B cell (primary cell): ENCODE measurements at regions of chr1 and their contacts with region 1.

Region 1: GRCh38 chr1:66446261-66447001 is 87.5 kb upstream of the SGIP1 start:
- DNase-seq: peak; percentile 86
- ATAC-seq: peak; percentile 52
- H3K4me3 ChIP-seq: peak overlapping the region in 1 of 5 experiments; percentile 43
- H3K4me3 Mint-ChIP-seq: peak overlapping the region; percentile 62
- H3K27ac ChIP-seq: peak overlapping the region; percentile 73 to 78
- H3K27ac Mint-ChIP-seq: peak overlapping the region; percentile 56
- H3K4me1 ChIP-seq: peaks cover 16 to 18% of the 10 kb centered on the region in 2 donors
- H3K4me1 Mint-ChIP-seq: peaks cover 29% of the 10 kb centered on the region
- H3K27me3 ChIP-seq: no peaks in the 10 kb centered on the region
- H3K27me3 Mint-ChIP-seq: no peaks in the 10 kb centered on the region
- CTCF ChIP-seq: peak; percentile 89

Region 2: DNA sequence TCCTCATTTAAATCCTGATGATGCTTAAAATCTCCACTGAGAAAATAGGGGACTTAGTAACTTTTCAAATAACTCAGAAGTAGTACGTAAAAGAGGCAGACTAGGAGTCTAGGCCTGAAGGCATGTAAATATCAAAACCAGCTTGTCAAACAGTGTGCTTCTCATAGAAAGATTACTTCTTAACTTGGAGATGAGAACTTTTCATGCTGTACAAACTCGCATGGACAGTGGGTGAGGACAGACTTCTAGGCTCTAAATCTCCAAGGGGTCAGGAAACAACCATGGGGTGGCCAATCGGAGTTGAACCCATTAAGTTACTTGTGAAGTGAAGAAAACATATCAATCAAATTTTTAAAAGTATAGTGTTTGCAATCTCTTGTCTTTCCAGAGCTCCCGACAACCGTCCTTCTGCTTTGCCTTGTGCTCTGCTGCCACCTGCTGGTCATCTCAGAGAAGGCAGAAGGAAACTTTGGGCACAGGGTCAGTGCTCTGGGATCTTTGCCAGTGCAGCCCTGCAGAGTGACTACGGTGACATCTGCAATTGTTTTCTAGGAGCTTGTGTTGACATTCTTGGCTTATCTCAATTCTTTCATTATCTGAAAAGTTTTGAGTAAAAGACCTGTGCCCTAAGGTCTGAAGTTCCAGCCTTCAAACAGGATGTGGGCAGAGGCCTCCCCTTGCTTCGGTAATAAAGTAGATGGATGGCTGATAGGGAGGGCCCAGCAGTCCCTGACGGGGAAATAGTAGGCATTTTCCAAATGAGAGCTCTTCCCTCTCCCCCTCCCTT is 758.8 kb before region 1 on chr1:
- CTCF ChIA-PET with region 1: interaction called, 15 read pairs
- POLR2A ChIA-PET with region 1: no interaction called
- intact Hi-C with region 1: no loop called
- DNase-seq: peak; percentile 71
- ATAC-seq: peak; percentile 56
- H3K4me3 ChIP-seq: no peak overlapping the region
- H3K4me3 Mint-ChIP-seq: no peak overlapping the region
- H3K27ac ChIP-seq: no peak overlapping the region
- H3K27ac Mint-ChIP-seq: no peak overlapping the region
- H3K4me1 ChIP-seq: no peaks in the 10 kb centered on the region
- H3K4me1 Mint-ChIP-seq: no peaks in the 10 kb centered on the region
- H3K27me3 ChIP-seq: no peaks in the 10 kb centered on the region
- H3K27me3 Mint-ChIP-seq: peaks cover 29% of the 10 kb centered on the region
- CTCF ChIP-seq: peak; percentile 95

Region 3: DNA sequence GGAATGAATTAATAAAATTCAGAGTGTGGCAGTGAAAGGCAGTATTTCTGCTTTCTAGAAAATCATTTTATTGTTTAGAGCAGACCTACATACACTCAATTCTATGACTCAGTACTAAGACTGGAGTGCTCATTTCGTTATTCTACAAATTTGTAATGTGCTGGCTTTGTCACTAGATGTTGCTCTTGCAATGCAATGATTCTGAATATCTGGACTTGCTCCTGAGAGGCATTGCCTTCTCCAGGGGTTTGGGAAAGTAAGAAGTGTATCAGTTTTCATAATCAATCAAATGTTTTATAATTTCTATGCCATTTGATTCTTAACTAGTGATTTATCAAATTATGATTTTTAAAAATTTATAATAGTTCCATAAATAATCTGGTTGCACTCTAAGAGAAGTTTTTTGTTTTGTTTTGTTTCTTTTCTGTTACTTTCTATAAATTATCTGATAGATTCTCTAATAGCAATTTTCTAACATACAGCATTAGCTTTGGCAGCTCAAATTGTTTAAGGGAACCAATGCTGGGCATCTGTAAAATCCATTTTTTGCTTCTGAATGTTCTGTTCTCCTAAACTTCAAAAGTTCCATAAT is 193.0 kb before region 1 on chr1:
- CTCF ChIA-PET with region 1: interaction called, 572 read pairs
- POLR2A ChIA-PET with region 1: no interaction called
- intact Hi-C with region 1: loop called (anchors 1 kb)
- DNase-seq: peak; percentile 73
- ATAC-seq: peak; percentile 73
- H3K4me3 ChIP-seq: no peak overlapping the region
- H3K4me3 Mint-ChIP-seq: no peak overlapping the region
- H3K27ac ChIP-seq: no peak overlapping the region
- H3K27ac Mint-ChIP-seq: no peak overlapping the region
- H3K4me1 ChIP-seq: peaks cover 7 to 13% of the 10 kb centered on the region in 2 donors
- H3K4me1 Mint-ChIP-seq: peaks cover 22% of the 10 kb centered on the region
- H3K27me3 ChIP-seq: no peaks in the 10 kb centered on the region
- H3K27me3 Mint-ChIP-seq: no peaks in the 10 kb centered on the region
- CTCF ChIP-seq: peak; percentile 83

Region 4: GRCh38 chr1:66282343-66282852 is 164.0 kb before region 1 on chr1:
- CTCF ChIA-PET with region 1: interaction called, 28 read pairs
- POLR2A ChIA-PET with region 1: no interaction called
- intact Hi-C with region 1: loop called (anchors 1 kb)
- DNase-seq: peak; percentile 94
- ATAC-seq: peak; percentile 91
- H3K4me3 ChIP-seq: peak overlapping the region in 2 of 5 experiments; percentile 10 to 39
- H3K4me3 Mint-ChIP-seq: peak overlapping the region; percentile 80
- H3K27ac ChIP-seq: peak overlapping the region; percentile 86 to 88
- H3K27ac Mint-ChIP-seq: peak overlapping the region; percentile 92
- H3K4me1 ChIP-seq: peaks cover 62 to 67% of the 10 kb centered on the region in 2 donors
- H3K4me1 Mint-ChIP-seq: peaks cover 79% of the 10 kb centered on the region
- H3K27me3 ChIP-seq: no peaks in the 10 kb centered on the region
- H3K27me3 Mint-ChIP-seq: no peaks in the 10 kb centered on the region
- CTCF ChIP-seq: peak; percentile 44

Region 5: GRCh38 chr1:66350001-66350547 is 96.4 kb before region 1 on chr1:
- CTCF ChIA-PET with region 1: interaction called, 79 read pairs
- POLR2A ChIA-PET with region 1: no interaction called
- intact Hi-C with region 1: no loop called
- DNase-seq: peak; percentile 82
- ATAC-seq: peak; percentile 78
- H3K4me3 ChIP-seq: peak overlapping the region in 2 of 5 experiments; percentile 4 to 31
- H3K4me3 Mint-ChIP-seq: peak overlapping the region; percentile 88
- H3K27ac ChIP-seq: peak overlapping the region; percentile 74 to 87
- H3K27ac Mint-ChIP-seq: peak overlapping the region; percentile 84
- H3K4me1 ChIP-seq: peaks cover 74 to 94% of the 10 kb centered on the region in 2 donors
- H3K4me1 Mint-ChIP-seq: peaks cover 95% of the 10 kb centered on the region
- H3K27me3 ChIP-seq: no peaks in the 10 kb centered on the region
- H3K27me3 Mint-ChIP-seq: no peaks in the 10 kb centered on the region
- CTCF ChIP-seq: no peak

Region 6: GRCh38 chr1:66380452-66381212 is 65.8 kb before region 1 on chr1:
- CTCF ChIA-PET with region 1: interaction called, 181 read pairs
- POLR2A ChIA-PET with region 1: interaction called, 11 read pairs
- intact Hi-C with region 1: no loop called
- DNase-seq: peak; percentile 91
- ATAC-seq: peak; percentile 99
- H3K4me3 ChIP-seq: peak overlapping the region in 2 of 5 experiments; percentile 13 to 39
- H3K4me3 Mint-ChIP-seq: peak overlapping the region; percentile 74
- H3K27ac ChIP-seq: peak overlapping the region; percentile 67 to 83
- H3K27ac Mint-ChIP-seq: peak overlapping the region; percentile 85
- H3K4me1 ChIP-seq: peaks cover 67 to 68% of the 10 kb centered on the region in 2 donors
- H3K4me1 Mint-ChIP-seq: peaks cover 75% of the 10 kb centered on the region
- H3K27me3 ChIP-seq: no peaks in the 10 kb centered on the region
- H3K27me3 Mint-ChIP-seq: no peaks in the 10 kb centered on the region
- CTCF ChIP-seq: no peak

Region 7: DNA sequence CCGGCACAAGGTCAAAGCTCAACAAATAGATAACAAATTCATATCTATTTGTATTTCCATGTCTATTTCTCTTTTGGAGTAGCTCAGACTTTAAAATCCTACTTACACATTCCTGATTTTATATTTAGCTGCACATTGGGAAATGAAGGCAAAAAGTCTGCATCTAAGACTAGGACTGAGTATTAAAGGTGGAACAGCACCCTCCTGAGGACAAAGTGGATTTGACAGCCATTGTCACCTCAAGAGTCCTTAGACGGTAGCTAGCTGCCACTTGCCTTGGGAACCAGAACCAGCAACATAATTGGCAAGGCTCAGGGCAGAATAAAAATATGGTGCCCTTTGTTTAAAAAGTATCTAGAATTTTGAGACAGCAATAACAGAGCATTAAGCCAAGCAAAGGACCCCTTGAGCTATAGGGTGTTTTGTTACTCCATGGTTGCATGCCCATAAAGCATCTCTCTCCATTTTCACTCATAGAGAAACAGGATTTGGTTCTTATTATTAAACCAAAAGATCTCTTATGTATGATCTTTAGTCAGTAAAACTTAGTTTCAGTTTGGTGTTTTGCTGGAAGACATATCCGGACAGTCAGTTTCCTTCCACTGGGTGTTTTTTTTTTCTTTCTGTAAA is 57.5 kb after region 1 on chr1:
- CTCF ChIA-PET with region 1: interaction called, 23 read pairs
- POLR2A ChIA-PET with region 1: no interaction called
- intact Hi-C with region 1: loop called (anchors 2 kb)
- DNase-seq: peak; percentile 49
- ATAC-seq: no peak
- H3K4me3 ChIP-seq: no peak overlapping the region
- H3K4me3 Mint-ChIP-seq: no peak overlapping the region
- H3K27ac ChIP-seq: no peak overlapping the region
- H3K27ac Mint-ChIP-seq: no peak overlapping the region
- H3K4me1 ChIP-seq: no peaks in the 10 kb centered on the region
- H3K4me1 Mint-ChIP-seq: no peaks in the 10 kb centered on the region
- H3K27me3 ChIP-seq: no peaks in the 10 kb centered on the region
- H3K27me3 Mint-ChIP-seq: peaks cover 20% of the 10 kb centered on the region
- CTCF ChIP-seq: peak; percentile 72